Natural killer cell (primary cell): ENCODE measurements at regions of chr12 and their contacts with region 1.

Region 1: DNA sequence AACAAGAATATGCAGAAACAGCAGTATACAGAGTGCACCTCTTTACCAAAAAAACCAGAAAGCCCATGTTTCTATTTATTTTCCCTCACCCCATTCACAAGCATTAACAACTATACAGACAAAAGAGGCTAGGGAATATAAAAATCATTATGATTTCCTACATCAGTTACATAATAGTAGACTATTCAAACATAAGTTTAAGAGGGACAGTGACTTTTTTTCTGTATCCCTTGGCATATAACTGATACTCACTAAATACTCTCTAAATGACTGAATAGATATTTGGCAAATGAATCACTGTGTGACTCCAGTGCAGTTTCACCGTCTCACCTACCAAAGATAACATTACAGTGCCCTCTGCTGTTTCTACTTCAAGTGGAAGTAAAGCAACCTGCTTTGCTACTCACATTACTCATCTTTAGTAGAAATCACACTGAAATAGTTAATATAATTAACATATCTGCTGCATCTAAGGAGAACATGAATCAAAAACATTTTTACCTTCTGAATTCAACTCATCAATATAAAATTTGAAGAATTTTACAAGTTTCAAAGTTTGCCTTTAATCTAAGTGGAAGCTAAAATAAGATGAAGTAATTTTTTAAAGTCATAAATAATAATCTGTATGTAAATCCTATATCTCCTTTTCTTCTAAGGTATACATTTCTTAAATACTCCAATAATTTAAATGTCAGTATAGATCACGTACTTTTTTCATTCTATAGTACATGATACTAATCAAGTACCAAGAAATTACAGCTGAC is 103.8 kb downstream of the OSBPL8 start:
- DNase-seq: peak in 1 of 2 donors; percentile 66
- ATAC-seq: peak; percentile 53 to 68 (median 64)
- H3K4me3 ChIP-seq: no peak overlapping the region
- H3K4me3 Mint-ChIP-seq: no peak overlapping the region
- H3K27ac ChIP-seq: no peak overlapping the region
- H3K27ac Mint-ChIP-seq: no peak overlapping the region
- H3K4me1 ChIP-seq: no peaks in the 10 kb centered on the region
- H3K4me1 Mint-ChIP-seq: peaks cover 23 to 28% of the 10 kb centered on the region in 2 donors
- H3K27me3 ChIP-seq: no peaks in the 10 kb centered on the region
- H3K27me3 Mint-ChIP-seq: no peaks in the 10 kb centered on the region
- CTCF ChIP-seq: peak; percentile 32

Region 2: DNA sequence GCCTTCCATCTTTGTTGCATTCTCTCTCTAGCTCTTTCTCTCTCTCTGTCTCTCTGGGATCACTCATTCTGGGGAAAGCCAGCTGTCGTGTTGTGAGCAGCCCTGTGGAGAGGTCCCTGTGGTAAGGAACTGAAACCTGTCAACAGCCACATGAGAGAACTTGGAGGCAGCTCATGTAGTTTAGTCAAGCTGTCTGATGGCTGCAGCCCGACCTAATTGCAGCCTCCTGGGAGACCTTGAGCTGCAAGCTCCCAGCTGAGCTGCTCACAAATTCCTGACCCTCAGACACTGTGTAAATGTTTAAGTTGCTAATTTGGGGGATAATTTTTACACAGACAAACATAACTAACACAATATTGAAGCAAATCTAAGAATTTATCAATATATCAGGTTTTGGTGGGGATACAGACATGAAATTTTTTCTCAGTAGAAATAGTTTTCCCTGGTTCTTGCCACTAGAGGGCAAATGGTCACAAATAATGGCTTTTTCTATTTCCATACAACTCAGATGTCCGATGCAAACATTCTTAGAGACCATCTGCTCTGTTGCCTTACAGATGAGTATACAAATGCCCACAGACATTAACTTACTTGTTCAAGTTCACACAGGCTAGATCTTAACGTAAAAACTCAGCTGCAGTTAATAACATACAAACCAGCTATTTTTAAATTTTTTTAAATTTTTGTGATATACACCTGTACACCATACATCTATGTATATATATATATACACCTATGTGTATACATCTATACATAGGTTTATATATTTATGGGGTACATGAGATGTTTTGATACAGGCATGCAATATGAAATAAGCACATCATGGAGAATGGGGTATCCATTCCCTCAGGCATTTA is 928.9 kb before region 1 on chr12:
- intact Hi-C with region 1: loop called (anchors 5 kb)
- DNase-seq: peak in 1 of 2 donors; percentile 63
- ATAC-seq: peak in 2 of 3 donors; percentile 32 to 63
- H3K4me3 ChIP-seq: no peak overlapping the region
- H3K4me3 Mint-ChIP-seq: no peak overlapping the region
- H3K27ac ChIP-seq: no peak overlapping the region
- H3K27ac Mint-ChIP-seq: no peak overlapping the region
- H3K4me1 ChIP-seq: no peaks in the 10 kb centered on the region
- H3K4me1 Mint-ChIP-seq: peaks cover 0 to 4% of the 10 kb centered on the region in 2 donors
- H3K27me3 ChIP-seq: peaks cover 5% of the 10 kb centered on the region
- H3K27me3 Mint-ChIP-seq: peaks cover 35 to 39% of the 10 kb centered on the region in 2 donors
- CTCF ChIP-seq: peak; percentile 59

Region 3: GRCh38 chr12:76402259-76402658 is 53.5 kb before region 1 on chr12:
- intact Hi-C with region 1: no loop called
- DNase-seq: no peak
- ATAC-seq: no peak
- H3K4me3 ChIP-seq: no peak overlapping the region
- H3K4me3 Mint-ChIP-seq: no peak overlapping the region
- H3K27ac ChIP-seq: no peak overlapping the region
- H3K27ac Mint-ChIP-seq: no peak overlapping the region
- H3K4me1 ChIP-seq: no peaks in the 10 kb centered on the region
- H3K4me1 Mint-ChIP-seq: peaks cover 0 to 10% of the 10 kb centered on the region in 2 donors
- H3K27me3 ChIP-seq: no peaks in the 10 kb centered on the region
- H3K27me3 Mint-ChIP-seq: no peaks in the 10 kb centered on the region
- CTCF ChIP-seq: no peak